ENCODE measurements at regions of chr17 and their contacts with region 1.

Region 1: GRCh38 chr17:50397111-50397918 is at the start of gene LRRC59:
- DNase-seq: peak; percentile 87 to 95 (median 93)
- ATAC-seq: peak; percentile 97 to 98
- H3K4me3 Mint-ChIP-seq: peak within 1 kb of the TSS; percentile 84 to 96 (median 94)
- H3K27ac Mint-ChIP-seq: peak within 1 kb of the TSS; percentile 87 to 96 (median 94)
- H3K4me1 Mint-ChIP-seq: peaks cover 16 to 45% (median 36%) of the 10 kb centered on the region in 4 donors
- H3K27me3 Mint-ChIP-seq: no peaks in the 10 kb centered on the region
- polyA plus RNA-seq, gene LRRC59: 12.8 to 14.1 (median 13.8) TPM

Region 2: DNA sequence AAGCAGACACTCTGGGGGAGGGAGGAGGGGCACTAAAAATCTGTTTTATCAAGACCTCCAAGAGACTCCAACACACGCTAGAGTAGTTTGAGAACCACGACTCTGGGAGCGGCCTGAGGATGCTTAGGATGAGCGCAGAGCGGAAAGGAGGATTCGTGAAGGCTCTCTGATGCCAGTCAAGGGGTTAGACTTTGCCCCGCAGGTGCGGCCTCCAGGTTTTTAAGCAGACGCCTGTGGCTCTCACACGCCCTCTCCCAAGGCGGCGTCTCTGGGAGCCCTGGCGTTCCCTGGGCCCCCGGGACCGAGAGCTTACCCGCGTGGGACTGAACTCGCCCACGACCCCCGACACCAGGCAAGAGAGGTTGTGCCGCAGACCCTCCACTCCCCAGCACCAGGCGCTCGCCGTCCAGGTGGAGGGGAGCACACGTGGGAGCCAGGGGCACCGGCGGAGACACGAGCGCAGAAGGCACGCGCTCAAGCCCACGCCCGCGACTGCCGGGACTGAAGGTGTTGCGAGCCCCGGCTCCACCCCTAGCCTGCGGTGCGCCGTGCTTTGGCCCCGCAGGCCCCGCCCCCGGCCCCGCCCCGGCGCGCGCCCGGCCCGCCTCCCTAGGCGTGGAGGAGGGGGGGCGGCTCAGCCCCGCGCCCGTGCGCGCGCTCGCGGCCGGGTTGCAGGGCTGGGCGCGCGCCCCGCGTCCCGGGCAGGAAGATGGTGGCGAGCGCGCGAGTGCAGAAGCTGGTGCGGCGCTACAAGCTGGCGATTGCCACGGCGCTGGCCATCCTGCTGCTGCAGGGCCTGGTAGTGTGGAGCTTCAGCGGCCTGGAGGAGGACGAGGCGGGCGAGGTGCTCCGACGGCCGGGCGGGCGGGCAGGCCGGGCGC is 51.6 kb before region 1 on chr17 and contains the start of gene XYLT2:
- POLR2A ChIA-PET with region 1: interaction called, 16 read pairs
- DNase-seq: peak; percentile 85 to 99 (median 92)
- ATAC-seq: peak; percentile 88
- H3K4me3 Mint-ChIP-seq: peak within 1 kb of the TSS; percentile 86 to 95 (median 88)
- H3K27ac Mint-ChIP-seq: peak within 1 kb of the TSS; percentile 65 to 95 (median 92)
- H3K4me1 Mint-ChIP-seq: peaks cover 22 to 41% (median 37%) of the 10 kb centered on the region in 4 donors
- H3K27me3 Mint-ChIP-seq: no peaks in the 10 kb centered on the region
- polyA plus RNA-seq, gene XYLT2: 6.9 to 16.8 (median 7.4) TPM

Region 3: DNA sequence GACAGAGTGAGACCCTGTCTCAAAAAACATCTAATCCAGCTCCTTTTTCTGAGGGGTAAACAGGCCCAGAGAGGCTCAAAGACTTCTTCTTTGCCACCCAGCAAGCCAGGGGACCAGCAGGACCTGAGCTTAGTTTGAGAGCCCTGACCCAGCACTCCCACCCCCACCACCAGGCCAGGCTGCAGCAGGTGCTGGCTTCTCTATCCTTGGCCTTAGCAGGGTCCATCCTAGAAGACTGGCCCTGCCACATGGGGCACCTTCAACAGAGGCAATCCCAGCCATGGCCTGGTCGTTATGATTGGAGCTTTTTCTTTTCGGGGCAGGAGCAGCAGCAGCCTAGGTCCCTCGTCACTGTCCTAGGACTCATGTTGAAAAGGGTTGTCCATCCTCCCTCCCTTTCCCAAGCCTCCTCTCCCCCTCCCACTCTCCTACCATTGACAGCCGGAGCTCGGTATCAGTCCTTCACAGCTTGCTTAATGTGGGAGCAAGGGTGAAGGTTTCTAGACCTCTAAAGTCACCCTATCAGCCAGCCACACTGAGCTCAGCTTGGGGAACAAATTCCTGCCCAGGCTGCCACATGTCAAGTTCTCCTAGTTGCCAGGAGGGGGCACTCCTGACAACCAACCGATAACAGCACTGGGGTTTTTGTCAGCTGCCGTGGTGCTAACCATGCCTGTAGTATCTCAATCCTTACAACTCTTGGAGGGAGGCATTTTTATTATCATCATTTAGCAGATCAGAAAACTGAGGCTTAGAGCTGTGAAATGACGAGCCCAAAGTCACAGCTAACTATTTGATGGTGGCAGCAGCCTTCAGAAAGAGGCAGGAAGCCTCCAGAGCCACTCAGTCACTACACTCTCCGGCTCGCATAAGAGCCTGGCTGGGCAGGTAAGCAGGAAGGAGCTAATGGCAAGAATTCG is 35.5 kb before region 1 on chr17:
- POLR2A ChIA-PET with region 1: interaction called, 10 read pairs
- DNase-seq: peak; percentile 32 to 77 (median 54)
- ATAC-seq: peak; percentile 89 to 94
- H3K4me3 Mint-ChIP-seq: peak overlapping the region in 9 of 10 donors; percentile 21 to 58 (median 47)
- H3K27ac Mint-ChIP-seq: peak overlapping the region; percentile 59 to 93 (median 84)
- H3K4me1 Mint-ChIP-seq: peaks cover 9 to 30% (median 12%) of the 10 kb centered on the region in 4 donors
- H3K27me3 Mint-ChIP-seq: no peaks in the 10 kb centered on the region

Region 4: DNA sequence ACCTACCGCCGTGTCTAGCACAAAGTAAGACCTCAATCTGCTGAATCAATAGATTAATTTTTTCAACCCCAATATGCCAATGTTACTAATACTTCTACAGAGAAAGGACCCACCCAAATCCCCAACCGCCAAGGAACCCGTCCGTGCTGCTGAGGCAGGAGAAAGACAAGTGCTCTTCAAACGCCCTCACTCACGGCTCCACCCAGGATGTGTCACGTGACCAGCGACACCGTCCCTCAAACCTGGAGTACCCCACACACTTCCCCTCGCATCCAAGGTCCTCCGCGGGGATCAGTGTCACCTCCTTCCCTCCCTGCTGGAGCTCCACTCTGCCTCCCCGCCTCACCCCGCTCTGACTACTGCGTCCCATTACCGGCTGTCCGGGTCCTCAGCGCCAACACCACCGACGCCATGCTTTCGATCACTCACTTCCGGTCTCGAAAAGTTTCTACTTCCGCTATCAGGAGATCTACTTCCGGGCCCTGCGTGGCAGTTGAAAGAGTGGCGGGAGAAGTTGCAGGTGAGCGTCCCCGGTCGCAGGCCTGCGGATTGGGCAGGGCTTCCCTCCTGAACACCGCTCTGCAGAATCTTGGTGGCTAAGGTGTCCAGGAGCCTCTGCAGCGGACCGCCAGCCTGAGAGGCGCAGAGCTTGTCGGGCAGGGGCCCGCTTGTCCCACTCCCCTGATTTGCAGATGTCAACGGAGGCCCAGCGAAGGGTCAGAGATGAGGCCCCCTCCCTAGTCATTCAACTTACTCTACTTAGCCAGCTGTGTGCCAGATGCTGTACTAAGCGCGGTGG is 24.4 kb before region 1 on chr17 and contains the starts of genes EME1 and MRPL27:
- POLR2A ChIA-PET with region 1: interaction called, 24 read pairs
- DNase-seq: peak; percentile 69 to 99 (median 84)
- ATAC-seq: peak; percentile 94 to 95
- H3K4me3 Mint-ChIP-seq: peak within 1 kb of the TSS; percentile 90 to 100 (median 98)
- H3K27ac Mint-ChIP-seq: peak within 1 kb of the TSS; percentile 99 to 100 (median 100)
- H3K4me1 Mint-ChIP-seq: peaks cover 17 to 30% (median 23%) of the 10 kb centered on the region in 4 donors
- H3K27me3 Mint-ChIP-seq: no peaks in the 10 kb centered on the region
- polyA plus RNA-seq, gene EME1: 0.38 TPM in 1 of 3 donors, not detected in the others
- polyA plus RNA-seq, gene MRPL27: 28.7 to 60.6 (median 45.7) TPM

Region 5: DNA sequence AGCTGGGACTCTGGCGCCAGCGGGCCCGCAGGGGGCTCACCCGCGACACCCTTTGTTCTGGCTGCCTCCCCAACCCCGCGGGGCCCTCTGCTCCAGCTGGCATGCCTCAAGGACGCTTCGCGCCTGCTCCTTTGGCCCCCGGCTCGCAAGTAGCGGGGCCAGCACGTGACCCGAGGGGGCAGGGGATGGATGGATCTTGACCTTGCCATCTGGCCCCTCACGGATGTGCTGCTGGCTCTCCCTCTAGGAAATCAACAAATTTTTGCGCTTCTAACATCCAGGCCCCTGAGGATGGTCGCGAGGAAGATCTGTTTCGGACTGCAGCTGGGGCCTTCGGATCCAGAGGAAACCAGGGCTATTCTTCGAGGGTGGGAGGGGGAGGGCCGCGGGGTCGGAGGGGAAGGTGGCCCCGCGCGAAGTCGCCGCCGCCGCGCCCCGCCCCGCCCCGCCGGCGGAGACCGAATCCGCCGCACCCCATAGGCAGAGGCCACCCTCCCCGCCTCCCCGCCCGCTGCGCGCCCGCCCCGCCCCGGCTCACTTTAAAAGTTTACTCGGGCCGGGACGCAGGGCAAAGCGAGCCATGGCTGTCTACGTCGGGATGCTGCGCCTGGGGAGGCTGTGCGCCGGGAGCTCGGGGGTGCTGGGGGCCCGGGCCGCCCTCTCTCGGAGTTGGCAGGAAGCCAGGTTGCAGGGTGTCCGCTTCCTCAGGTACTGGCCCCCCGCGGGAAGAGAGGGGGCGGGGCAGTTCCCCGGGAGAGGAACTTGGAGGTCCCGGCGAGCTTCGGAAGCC is 28.6 kb after region 1 on chr17 and contains the start of gene ACSF2:
- POLR2A ChIA-PET with region 1: interaction called, 12 read pairs
- DNase-seq: peak; percentile 36 to 81 (median 56)
- ATAC-seq: peak; percentile 84 to 87
- H3K4me3 Mint-ChIP-seq: peak within 1 kb of the TSS; percentile 82 to 90 (median 88)
- H3K27ac Mint-ChIP-seq: peak within 1 kb of the TSS; percentile 63 to 95 (median 91)
- H3K4me1 Mint-ChIP-seq: peaks cover 16 to 52% (median 35%) of the 10 kb centered on the region in 4 donors
- H3K27me3 Mint-ChIP-seq: no peaks in the 10 kb centered on the region
- polyA plus RNA-seq, gene ACSF2: 1.2 to 2.3 (median 2.1) TPM